A673 (cell line): ENCODE measurements at regions of chr6 and their contacts with region 1.

Region 1: GRCh38 chr6:121647905-121648304 is 212.5 kb downstream of the GJA1 start:
- DNase-seq: no peak
- H3K4me3 ChIP-seq: no peak overlapping the region
- H3K27ac ChIP-seq: no peak overlapping the region
- H3K4me1 ChIP-seq: peaks cover 4% of the 10 kb centered on the region
- H3K27me3 ChIP-seq: no peaks in the 10 kb centered on the region
- CTCF ChIP-seq: no peak

Region 2: GRCh38 chr6:121627761-121628160 is 20.1 kb before region 1 on chr6:
- CTCF ChIA-PET with region 1: no interaction called
- POLR2A ChIA-PET with region 1: no interaction called
- intact Hi-C with region 1: loop called (anchors 1 kb)
- DNase-seq: no peak
- H3K4me3 ChIP-seq: no peak overlapping the region
- H3K27ac ChIP-seq: no peak overlapping the region
- H3K4me1 ChIP-seq: no peaks in the 10 kb centered on the region
- H3K27me3 ChIP-seq: no peaks in the 10 kb centered on the region
- CTCF ChIP-seq: no peak

Region 3: GRCh38 chr6:121697921-121698320 is 50.0 kb after region 1 on chr6:
- CTCF ChIA-PET with region 1: no interaction called
- POLR2A ChIA-PET with region 1: no interaction called
- intact Hi-C with region 1: no loop called
- DNase-seq: no peak
- H3K4me3 ChIP-seq: no peak overlapping the region
- H3K27ac ChIP-seq: no peak overlapping the region
- H3K4me1 ChIP-seq: peaks cover 5% of the 10 kb centered on the region
- H3K27me3 ChIP-seq: no peaks in the 10 kb centered on the region
- CTCF ChIP-seq: no peak